HepG2 (cell line): ENCODE measurements at regions of chr7 and their contacts with region 1.

Region 1: DNA sequence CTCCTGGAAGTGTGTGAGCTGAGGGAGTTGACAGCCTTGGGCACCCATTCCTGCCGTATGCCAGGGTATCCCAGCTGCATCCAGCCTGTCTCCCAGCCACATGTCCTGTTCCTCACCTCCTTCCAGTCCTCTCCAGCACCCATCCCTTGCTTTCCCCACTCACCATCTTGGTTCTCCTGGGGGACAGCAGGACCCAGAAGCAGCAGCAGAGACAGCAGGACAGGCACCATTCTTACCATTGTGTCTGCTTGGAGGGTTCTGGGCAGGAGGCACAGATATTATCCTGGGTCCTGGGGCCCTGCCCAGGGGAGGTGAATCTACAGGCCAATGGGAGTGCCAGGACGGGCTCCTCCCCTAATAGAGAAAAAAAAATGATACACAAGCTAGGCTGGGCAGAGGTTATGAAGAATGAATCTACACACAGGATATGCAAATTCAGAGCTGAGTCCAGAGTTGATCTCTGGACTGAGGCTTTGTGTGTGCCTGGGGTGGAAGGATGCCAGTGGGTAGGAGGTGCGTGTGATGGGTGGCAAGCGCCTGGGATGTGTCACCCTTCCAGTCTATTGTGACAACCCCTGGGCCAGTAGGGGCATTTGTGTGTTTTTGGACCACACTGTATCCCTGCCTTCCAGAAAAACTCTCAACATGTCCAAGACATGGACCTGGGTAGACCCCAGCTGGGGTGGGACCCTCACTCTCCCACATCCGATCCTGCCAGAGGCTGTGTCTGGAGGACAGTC is at the start of gene AZGP1:
- DNase-seq: peak; percentile 95
- ATAC-seq: peak; percentile 82
- H3K4me3 ChIP-seq: peak within 1 kb of the TSS; percentile 62 to 80 (median 66)
- H3K27ac ChIP-seq: peak within 1 kb of the TSS; percentile 74
- H3K4me1 ChIP-seq: peaks cover 57% of the 10 kb centered on the region
- H3K27me3 ChIP-seq: no peaks in the 10 kb centered on the region; a peak in 1 of 5 replicates
- CTCF ChIP-seq: no peak
- EP300 ChIP-seq: peak in 1 of 2 experiments; percentile 30; a peak in 2 of 4 replicates
- POLR2A ChIP-seq: peak; percentile 60 to 88
- RAD21 ChIP-seq: no peak
- total RNA-seq, gene AZGP1: 37.9 and 93.8 TPM in 2 replicates

Region 2: GRCh38 chr7:99918959-99919813 is 56.8 kb before region 1 on chr7 and contains the start of gene TRIM4:
- CTCF ChIA-PET with region 1: no interaction called
- POLR2A ChIA-PET with region 1: interaction called, 38 read pairs
- in situ Hi-C with region 1: no loop called
- intact Hi-C with region 1: no loop called
- DNase-seq: peak; percentile 90
- ATAC-seq: peak; percentile 99
- H3K4me3 ChIP-seq: peak within 1 kb of the TSS; percentile 82 to 90 (median 86)
- H3K27ac ChIP-seq: peak within 1 kb of the TSS; percentile 90
- H3K4me1 ChIP-seq: peaks cover 35% of the 10 kb centered on the region
- H3K27me3 ChIP-seq: no peaks in the 10 kb centered on the region; a peak in 1 of 5 replicates
- CTCF ChIP-seq: peak; percentile 67
- EP300 ChIP-seq: no peak; a peak in 1 of 4 replicates
- POLR2A ChIP-seq: peak; percentile 84 to 85
- RAD21 ChIP-seq: peak; percentile 67
- total RNA-seq, gene TRIM4: 21.7 and 25.1 TPM in 2 replicates

Region 3: GRCh38 chr7:99949638-99950228 is 26.2 kb before region 1 on chr7:
- CTCF ChIA-PET with region 1: no interaction called
- POLR2A ChIA-PET with region 1: interaction called, 16 read pairs
- in situ Hi-C with region 1: no loop called
- intact Hi-C with region 1: no loop called
- DNase-seq: peak; percentile 21
- ATAC-seq: no peak
- H3K4me3 ChIP-seq: no peak overlapping the region
- H3K27ac ChIP-seq: no peak overlapping the region
- H3K4me1 ChIP-seq: peaks cover 7% of the 10 kb centered on the region; the same call in 1 of the 2 replicates
- H3K27me3 ChIP-seq: no peaks in the 10 kb centered on the region
- CTCF ChIP-seq: peak; percentile 47
- EP300 ChIP-seq: no peak
- POLR2A ChIP-seq: no peak
- RAD21 ChIP-seq: no peak

Region 4: DNA sequence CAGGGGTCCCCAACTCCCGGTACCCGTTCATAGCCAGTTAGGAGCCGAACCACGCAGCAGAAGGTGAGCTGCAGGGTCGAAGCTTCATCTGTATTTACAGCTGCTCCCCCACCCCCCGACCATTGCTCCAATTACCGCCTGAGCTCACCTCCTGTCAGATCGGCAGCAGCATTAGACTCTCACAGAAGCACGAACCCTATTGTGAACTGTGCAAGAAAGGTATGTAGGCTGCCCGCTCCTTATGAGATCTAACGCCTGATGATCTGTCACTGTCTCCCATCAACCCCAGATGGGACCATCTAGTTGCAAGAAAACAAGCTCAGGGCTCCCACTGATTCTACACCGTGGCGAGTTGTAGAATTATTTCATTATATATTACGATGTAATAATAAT is 14.5 kb after region 1 on chr7:
- CTCF ChIA-PET with region 1: interaction called, 8 read pairs
- POLR2A ChIA-PET with region 1: interaction called, 15 read pairs
- in situ Hi-C with region 1: no loop called
- intact Hi-C with region 1: no loop called
- DNase-seq: no peak
- ATAC-seq: no peak
- H3K4me3 ChIP-seq: no peak overlapping the region; a peak in 1 of 6 replicates
- H3K27ac ChIP-seq: no peak overlapping the region
- H3K4me1 ChIP-seq: peaks cover 60% of the 10 kb centered on the region
- H3K27me3 ChIP-seq: no peaks in the 10 kb centered on the region
- CTCF ChIP-seq: no peak
- EP300 ChIP-seq: no peak
- POLR2A ChIP-seq: no peak
- RAD21 ChIP-seq: no peak

Region 5: DNA sequence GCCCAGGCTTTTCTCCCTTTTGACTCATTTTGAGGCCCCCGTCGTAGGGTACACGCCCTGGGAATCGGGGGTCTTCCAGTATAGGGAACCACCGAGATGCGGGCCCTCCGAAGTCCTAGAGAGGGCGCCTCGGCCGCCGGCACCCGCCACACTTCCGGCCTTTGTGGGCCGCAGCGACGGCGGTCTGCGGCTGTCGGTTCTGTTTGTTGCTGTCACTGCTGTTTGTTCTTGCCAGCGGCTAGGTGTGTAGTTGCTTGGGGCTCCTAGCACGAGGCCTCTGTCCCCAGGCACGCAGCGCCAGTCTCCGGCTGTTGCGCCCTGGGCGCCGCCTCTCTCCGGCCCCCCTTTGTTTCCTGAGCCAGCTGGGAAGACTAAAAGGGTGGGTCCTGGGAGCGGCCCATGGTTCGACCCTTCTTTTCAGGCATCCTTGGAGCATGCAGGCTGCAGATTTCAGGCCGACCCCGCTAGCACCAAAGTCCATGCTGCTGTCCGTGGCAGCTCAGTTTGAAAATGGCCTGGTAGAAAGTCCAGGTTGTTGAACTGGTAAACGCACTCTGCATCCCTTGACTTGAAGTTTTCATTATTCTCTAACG is 21.7 kb after region 1 on chr7:
- CTCF ChIA-PET with region 1: interaction called, 3 read pairs
- POLR2A ChIA-PET with region 1: interaction called, 15 read pairs
- in situ Hi-C with region 1: no loop called
- intact Hi-C with region 1: no loop called
- DNase-seq: peak; percentile 87
- ATAC-seq: peak; percentile 92
- H3K4me3 ChIP-seq: peak overlapping the region; percentile 20 to 59 (median 48); a peak in 5 of 6 replicates
- H3K27ac ChIP-seq: peak overlapping the region; percentile 95
- H3K4me1 ChIP-seq: peaks cover 91% of the 10 kb centered on the region
- H3K27me3 ChIP-seq: no peaks in the 10 kb centered on the region
- CTCF ChIP-seq: peak; percentile 66
- EP300 ChIP-seq: peak in 1 of 2 experiments; percentile 71; a peak in 2 of 4 replicates
- POLR2A ChIP-seq: peak; percentile 80
- RAD21 ChIP-seq: peak; percentile 76

Region 6: DNA sequence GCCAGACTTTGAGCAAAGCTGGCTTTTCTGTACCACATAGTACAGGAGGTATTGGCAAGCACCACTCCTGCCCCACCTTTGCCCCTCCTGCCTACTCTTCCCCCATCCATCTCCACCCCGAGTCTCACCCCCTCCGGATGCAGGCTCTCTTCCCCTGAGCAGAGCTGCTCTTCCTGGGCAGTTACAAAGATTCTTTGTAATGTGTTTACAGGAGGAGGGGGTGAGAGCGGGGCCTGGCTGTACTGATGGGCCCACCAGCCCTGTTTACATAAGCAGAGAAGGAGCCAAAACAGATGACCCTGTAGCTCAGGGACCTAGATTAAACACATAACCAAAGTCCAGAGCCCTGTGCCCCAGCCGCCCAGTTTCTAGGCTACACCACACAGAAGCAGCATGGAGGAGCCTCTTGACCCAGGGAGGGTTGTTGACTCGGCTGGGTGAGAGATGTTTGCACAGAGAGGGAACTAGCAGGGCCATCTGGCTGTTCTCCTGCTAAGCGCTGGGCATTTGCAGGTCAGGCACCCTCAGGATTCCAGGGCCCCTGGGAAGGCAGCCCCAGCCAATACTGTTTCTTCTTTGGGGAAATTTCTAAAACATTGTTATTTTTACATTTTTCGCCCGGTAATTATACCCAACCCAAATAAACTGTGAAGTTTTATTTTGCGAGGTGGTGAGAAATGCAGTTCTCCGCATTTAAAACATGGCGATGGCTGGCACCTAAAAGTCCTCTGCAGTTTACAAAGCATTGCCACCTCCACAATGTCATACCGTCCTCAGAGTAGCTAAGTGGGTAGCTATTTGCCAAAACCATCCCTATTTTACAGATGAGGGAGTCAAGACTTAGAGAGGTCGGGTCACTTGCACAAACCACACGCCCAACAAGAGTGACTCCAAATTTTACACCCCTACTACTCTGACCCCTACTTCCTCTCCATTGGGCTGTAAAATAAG is 28.0 kb after region 1 on chr7:
- CTCF ChIA-PET with region 1: no interaction called
- POLR2A ChIA-PET with region 1: interaction called, 11 read pairs
- in situ Hi-C with region 1: no loop called
- intact Hi-C with region 1: no loop called
- DNase-seq: peak; percentile 99
- ATAC-seq: peak; percentile 96
- H3K4me3 ChIP-seq: peak overlapping the region in 1 of 3 experiments; percentile 12; a peak in 1 of 6 replicates
- H3K27ac ChIP-seq: peak overlapping the region; percentile 96
- H3K4me1 ChIP-seq: peaks cover 97% of the 10 kb centered on the region
- H3K27me3 ChIP-seq: no peaks in the 10 kb centered on the region
- CTCF ChIP-seq: peak; percentile 35; the same call in 1 of the 2 replicates
- EP300 ChIP-seq: peak; percentile 74 to 98; a peak in 3 of 4 replicates
- POLR2A ChIP-seq: 0 out of 4 replicates have a peak, but pooled peaks of 1 of the 2 experiments have one; percentile 18
- RAD21 ChIP-seq: peak; percentile 75

Region 7: GRCh38 chr7:100034871-100035510 is 59.0 kb after region 1 on chr7:
- CTCF ChIA-PET with region 1: no interaction called
- POLR2A ChIA-PET with region 1: no interaction called
- in situ Hi-C with region 1: no loop called
- intact Hi-C with region 1: no loop called
- DNase-seq: no peak
- ATAC-seq: no peak
- H3K4me3 ChIP-seq: no peak overlapping the region
- H3K27ac ChIP-seq: peak overlapping the region; percentile 17
- H3K4me1 ChIP-seq: peaks cover 46% of the 10 kb centered on the region
- H3K27me3 ChIP-seq: no peaks in the 10 kb centered on the region
- CTCF ChIP-seq: no peak
- EP300 ChIP-seq: no peak
- POLR2A ChIP-seq: no peak
- RAD21 ChIP-seq: no peak

Region 8: GRCh38 chr7:100049441-100050311 is 73.7 kb after region 1 on chr7 and contains the start of gene ZSCAN21:
- CTCF ChIA-PET with region 1: no interaction called
- POLR2A ChIA-PET with region 1: interaction called, 7 read pairs
- in situ Hi-C with region 1: no loop called
- intact Hi-C with region 1: loop called (anchors 5 kb)
- DNase-seq: peak; percentile 75
- ATAC-seq: peak; percentile 92
- H3K4me3 ChIP-seq: peak within 1 kb of the TSS; percentile 62 to 80 (median 76)
- H3K27ac ChIP-seq: peak within 1 kb of the TSS; percentile 77
- H3K4me1 ChIP-seq: peaks cover 29% of the 10 kb centered on the region
- H3K27me3 ChIP-seq: no peaks in the 10 kb centered on the region
- CTCF ChIP-seq: peak; percentile 62
- EP300 ChIP-seq: no peak
- POLR2A ChIP-seq: peak; percentile 73 to 75
- RAD21 ChIP-seq: no peak
- total RNA-seq, gene ZSCAN21: 10.0 and 11.8 TPM in 2 replicates